ENCODE measurements at regions of chr10 and their contacts with region 1.

Region 1: DNA sequence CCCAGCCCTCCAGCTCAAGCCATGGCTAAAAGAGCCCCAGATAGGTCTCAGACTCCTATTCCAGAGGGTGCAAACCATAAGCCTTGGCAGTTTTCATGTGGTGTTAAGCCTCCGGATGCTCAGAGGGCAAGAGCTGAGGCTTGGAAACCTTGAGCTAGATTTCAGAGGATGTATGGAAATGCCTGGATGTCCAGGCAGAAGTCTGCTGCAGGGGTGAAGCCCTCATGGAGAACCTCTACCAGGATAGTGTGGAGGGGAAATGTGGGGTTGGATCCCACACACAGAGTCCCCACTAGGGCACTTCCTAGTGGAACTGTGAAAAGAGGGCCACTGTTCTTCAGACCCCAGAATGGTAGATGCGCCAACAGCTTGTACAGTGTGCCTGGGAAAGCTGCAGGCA is 13.2 kb upstream of the HPSE2 start:
- DNase-seq: no peak

Region 2: DNA sequence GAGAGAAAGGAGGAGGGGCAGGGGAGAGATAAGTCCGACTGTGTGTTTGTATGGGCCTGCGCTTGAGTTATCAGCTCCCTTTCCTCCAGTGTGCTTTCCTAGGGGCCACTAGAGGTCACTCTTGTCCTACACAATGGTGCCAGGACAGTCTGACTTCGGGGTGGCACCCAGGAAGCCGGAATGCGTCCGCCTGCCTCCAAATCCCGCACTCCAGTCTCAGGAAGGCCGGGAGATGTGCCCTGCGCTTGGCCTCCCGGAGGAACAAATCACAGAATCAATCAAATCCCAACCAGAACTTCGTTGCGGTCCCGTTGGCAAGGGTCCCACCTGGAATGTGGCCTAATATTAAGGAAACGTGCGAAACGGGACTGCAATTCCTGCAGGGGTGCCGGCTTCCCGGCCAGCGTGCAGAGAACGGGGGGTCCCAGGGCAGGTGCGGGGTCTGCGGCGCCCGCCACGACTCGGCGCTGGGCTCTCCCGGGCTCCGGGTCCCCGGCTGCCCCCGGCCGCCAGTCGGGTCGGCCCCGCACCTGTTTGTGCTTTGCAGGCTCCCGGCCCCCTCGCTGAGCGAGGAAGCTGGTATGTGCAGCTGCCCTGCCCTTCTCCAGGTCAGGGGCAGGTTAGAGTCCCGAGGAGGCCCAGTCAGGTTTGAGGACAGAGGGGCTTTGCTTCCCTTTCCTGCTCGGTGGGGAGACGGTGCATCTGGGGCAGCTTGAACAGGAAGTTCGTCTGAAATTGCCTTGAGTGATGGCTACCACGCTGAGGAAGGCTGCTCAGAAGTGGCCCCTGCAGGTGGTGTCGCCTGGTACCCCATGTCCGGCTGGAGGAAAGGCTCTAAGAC is 781.1 kb before region 1 on chr10:
- intact Hi-C with region 1: loop called (anchors 5 kb)
- DNase-seq: peak; percentile 62 to 92 (median 80)

Region 3: DNA sequence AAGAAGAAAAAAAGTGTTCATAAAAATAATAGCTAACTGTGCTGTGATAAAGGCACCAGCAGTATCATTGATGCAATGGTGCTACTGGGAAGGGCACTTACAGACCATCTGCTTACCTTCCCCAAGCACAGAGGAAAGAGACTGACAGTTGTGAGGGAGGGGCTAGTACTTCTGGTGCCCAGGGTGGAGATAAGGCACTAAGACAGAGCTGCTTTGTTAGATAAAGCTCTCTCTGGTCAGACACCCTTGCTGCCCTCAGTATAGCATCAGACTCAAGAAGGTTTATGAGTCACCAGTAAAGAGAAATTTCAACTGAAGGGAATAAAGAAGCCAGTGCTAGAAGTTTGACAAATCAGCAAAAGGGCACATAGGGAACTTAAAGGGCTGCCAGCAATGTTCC is 338.8 kb before region 1 on chr10:
- intact Hi-C with region 1: no loop called
- DNase-seq: no peak

Region 4: DNA sequence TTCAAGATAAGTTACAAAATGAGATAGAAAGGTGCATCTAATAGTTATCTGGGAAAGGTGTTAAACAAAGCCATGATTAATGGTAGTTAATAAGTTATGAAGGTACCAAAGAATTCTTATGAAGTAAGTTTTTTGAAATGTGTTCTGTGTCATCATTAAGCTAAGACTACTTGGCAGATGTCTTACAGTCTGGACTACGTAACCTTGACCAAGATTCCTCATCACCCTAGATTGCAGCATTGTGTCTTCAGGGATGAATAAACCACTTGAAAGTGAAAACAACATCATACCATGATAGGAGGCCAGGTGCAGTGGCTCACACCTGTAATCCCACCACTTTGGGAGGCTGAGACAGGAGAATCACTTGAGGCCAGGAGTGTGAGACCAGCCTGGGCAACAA is 133.4 kb after region 1 on chr10:
- intact Hi-C with region 1: no loop called
- DNase-seq: no peak

Measured in head of caudate nucleus (tissue), 42 donors.